CD4-positive, alpha-beta T cell (primary cell): ENCODE measurements at regions of chr22 and their contacts with region 1.

Region 1: GRCh38 chr22:37862570-37863325 is 13.5 kb downstream of the EIF3L start:
- DNase-seq: no peak
- ATAC-seq: no peak
- H3K4me3 ChIP-seq: no peak overlapping the region
- H3K4me3 Mint-ChIP-seq: no peak overlapping the region
- H3K27ac ChIP-seq: no peak overlapping the region
- H3K27ac Mint-ChIP-seq: no peak overlapping the region
- H3K4me1 ChIP-seq: peaks cover 3% of the 10 kb centered on the region
- H3K4me1 Mint-ChIP-seq: peaks cover 7% of the 10 kb centered on the region
- H3K27me3 ChIP-seq: no peaks in the 10 kb centered on the region
- H3K27me3 Mint-ChIP-seq: no peaks in the 10 kb centered on the region
- CTCF ChIP-seq: no peak

Region 2: DNA sequence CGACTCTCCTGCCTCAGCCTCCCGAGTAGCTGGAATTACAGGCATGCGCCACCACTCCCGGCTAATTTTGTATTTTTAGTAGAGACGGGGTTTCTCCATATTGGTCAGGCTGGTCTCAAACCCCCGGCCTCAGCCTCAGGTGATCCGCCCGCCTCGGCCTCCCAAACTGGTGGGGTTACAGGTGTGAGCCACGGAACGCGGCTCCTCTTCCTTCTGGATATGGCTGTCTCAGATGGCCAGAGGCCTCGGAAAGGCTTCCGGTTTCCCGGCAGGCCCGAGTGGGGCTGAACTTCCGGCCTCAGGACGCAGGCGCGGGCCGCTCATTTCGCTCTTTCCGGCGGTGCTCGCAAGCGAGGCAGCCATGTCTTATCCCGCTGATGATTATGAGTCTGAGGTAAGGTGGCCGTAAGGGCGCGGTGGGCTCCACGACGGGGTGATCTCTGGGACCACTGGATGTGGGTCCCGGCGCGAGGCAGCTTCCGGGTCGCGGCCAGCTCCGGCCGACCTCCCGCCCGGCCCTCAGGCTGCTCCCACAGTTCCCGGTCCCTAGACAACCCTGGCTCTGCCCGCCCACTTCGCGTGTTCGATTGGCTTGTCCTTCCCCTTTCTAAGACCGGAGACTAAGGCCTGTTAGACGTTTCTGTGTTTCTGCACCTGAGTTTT is 13.5 kb before region 1 on chr22 and contains the start of gene EIF3L:
- CTCF ChIA-PET with region 1: interaction called, 10 read pairs
- POLR2A ChIA-PET with region 1: interaction called, 5 read pairs
- intact Hi-C with region 1: loop called in 1 of 2 experiments (anchors 2 kb)
- DNase-seq: peak; percentile 77 to 92 (median 84)
- ATAC-seq: peak; percentile 63
- H3K4me3 ChIP-seq: peak within 1 kb of the TSS; percentile 83
- H3K4me3 Mint-ChIP-seq: peak within 1 kb of the TSS; percentile 90
- H3K27ac ChIP-seq: peak within 1 kb of the TSS; percentile 78 to 89
- H3K27ac Mint-ChIP-seq: peak within 1 kb of the TSS; percentile 97
- H3K4me1 ChIP-seq: peaks cover 31% of the 10 kb centered on the region
- H3K4me1 Mint-ChIP-seq: peaks cover 51% of the 10 kb centered on the region
- H3K27me3 ChIP-seq: no peaks in the 10 kb centered on the region
- H3K27me3 Mint-ChIP-seq: no peaks in the 10 kb centered on the region
- CTCF ChIP-seq: no peak
- total RNA-seq, gene EIF3L: 525 to 541 TPM

Region 3: GRCh38 chr22:37897816-37898215 is 35.1 kb after region 1 on chr22:
- CTCF ChIA-PET with region 1: no interaction called
- POLR2A ChIA-PET with region 1: no interaction called
- intact Hi-C with region 1: no loop called
- DNase-seq: no peak
- ATAC-seq: no peak
- H3K4me3 ChIP-seq: no peak overlapping the region
- H3K4me3 Mint-ChIP-seq: no peak overlapping the region
- H3K27ac ChIP-seq: no peak overlapping the region
- H3K27ac Mint-ChIP-seq: peak overlapping the region; percentile 82
- H3K4me1 ChIP-seq: peaks cover 26% of the 10 kb centered on the region
- H3K4me1 Mint-ChIP-seq: peaks cover 33% of the 10 kb centered on the region
- H3K27me3 ChIP-seq: no peaks in the 10 kb centered on the region
- H3K27me3 Mint-ChIP-seq: no peaks in the 10 kb centered on the region
- CTCF ChIP-seq: no peak

Region 4: DNA sequence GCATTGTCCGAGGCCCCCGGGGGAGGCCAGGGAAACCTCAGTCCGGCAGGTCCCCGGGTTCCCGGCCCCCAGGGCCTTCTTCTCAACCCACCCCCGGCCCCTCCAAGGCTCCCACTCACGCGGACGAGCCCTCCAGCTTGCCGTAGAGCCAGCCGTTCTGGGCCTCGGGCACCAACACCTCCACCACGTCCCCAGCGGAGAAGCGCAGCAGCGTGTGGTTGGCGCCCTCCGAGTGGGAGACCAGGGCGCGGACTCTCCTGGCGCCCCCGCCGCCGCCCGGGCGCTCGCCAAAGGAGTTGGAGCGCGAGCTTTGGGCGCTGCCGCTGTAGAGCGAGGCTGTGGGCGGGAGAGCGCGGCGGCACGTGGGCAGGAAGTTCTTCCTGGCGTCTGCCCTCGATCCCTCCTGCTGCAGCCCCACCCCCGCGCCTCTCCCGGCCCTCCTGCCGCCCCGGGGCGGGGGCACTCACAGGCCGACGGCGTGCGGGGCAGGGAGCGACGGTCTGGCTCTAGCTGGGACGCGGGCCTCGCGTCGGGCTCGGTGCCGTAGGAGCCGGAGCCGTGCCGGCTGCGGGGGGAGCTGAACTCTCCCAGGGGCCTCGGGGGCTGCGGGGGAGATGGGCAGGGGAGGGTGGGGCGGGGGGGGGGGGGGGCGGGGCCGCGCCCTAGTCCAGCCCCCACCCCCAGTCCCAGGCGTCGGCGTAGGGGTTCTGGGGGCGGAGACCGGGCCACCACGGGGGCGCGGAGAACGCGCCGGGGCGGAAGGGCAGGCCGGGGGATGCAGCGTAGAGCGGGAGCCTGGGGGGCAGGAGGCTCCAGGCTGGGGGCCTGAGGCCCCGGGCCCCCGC is 226.1 kb after region 1 on chr22:
- CTCF ChIA-PET with region 1: no interaction called
- POLR2A ChIA-PET with region 1: no interaction called
- intact Hi-C with region 1: no loop called
- DNase-seq: no peak
- ATAC-seq: no peak
- H3K4me3 ChIP-seq: no peak overlapping the region
- H3K4me3 Mint-ChIP-seq: no peak overlapping the region
- H3K27ac ChIP-seq: no peak overlapping the region
- H3K27ac Mint-ChIP-seq: no peak overlapping the region
- H3K4me1 ChIP-seq: no peaks in the 10 kb centered on the region
- H3K4me1 Mint-ChIP-seq: no peaks in the 10 kb centered on the region
- H3K27me3 ChIP-seq: peaks cover 6 to 11% of the 10 kb centered on the region in 2 experiments
- H3K27me3 Mint-ChIP-seq: peaks cover 28% of the 10 kb centered on the region
- CTCF ChIP-seq: no peak